ENCODE measurements at regions of chr15 and their contacts with region 1.

Region 1: GRCh38 chr15:56821721-56822425 is 88.6 kb upstream of the ZNF280D start:
- DNase-seq: peak; percentile 7
- H3K4me3 Mint-ChIP-seq: no peak overlapping the region
- H3K27ac Mint-ChIP-seq: no peak overlapping the region
- H3K4me1 Mint-ChIP-seq: peaks cover 7% of the 10 kb centered on the region
- H3K27me3 Mint-ChIP-seq: peaks cover 7% of the 10 kb centered on the region

Region 2: DNA sequence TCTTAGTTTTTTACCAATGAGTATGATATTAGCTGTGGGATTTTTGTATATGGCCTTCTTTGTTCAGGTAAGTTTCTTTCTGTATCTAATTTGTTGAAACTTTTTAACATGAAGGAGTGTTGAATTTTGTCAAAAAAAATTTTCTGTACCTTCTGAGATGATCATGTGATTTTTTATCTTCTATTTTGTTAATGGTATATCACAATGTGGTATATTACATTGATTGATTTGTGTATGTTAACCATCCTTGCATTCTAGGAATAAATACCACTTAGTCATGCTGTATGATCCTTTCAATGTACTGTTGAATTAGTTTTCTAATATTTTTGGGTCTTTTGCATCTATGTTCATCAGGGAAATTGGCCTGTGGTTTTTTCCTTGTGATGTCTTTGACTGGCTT is 264.5 kb before region 1 on chr15:
- intact Hi-C with region 1: no loop called
- DNase-seq: no peak
- H3K4me3 Mint-ChIP-seq: no peak overlapping the region
- H3K27ac Mint-ChIP-seq: no peak overlapping the region
- H3K4me1 Mint-ChIP-seq: no peaks in the 10 kb centered on the region
- H3K27me3 Mint-ChIP-seq: peaks cover 9% of the 10 kb centered on the region

Region 3: DNA sequence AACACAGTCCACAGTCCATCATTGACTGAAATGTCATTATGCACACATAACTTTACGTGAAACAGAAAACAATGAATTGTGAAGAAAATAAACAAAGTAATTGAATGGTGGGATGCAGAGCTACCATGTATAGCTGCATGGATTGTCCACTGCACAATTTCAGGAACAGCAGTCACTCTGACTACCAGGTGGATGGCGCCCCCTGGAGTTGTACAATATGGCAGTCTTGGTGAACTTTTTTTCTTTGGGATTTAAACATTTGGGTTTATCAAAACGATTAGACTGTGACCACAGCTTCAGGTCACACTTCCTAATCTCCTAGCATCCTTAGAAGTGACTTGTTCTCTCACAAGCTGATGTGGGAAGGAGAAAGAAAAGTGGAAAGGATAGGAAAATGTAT is 47.7 kb after region 1 on chr15:
- intact Hi-C with region 1: loop called (anchors 5 kb)
- DNase-seq: peak; percentile 8
- H3K4me3 Mint-ChIP-seq: no peak overlapping the region
- H3K27ac Mint-ChIP-seq: no peak overlapping the region
- H3K4me1 Mint-ChIP-seq: no peaks in the 10 kb centered on the region
- H3K27me3 Mint-ChIP-seq: peaks cover 12% of the 10 kb centered on the region

Measured in activated T-helper 1 cell treated with anti-CD3 and anti-CD28 coated beads, Interleukin-12 subunit alpha, Interleukin-12 subunit beta, Interleukin-2, Interleukin-4 antibody, amounts not matched to agents 30 ng/mL and 10 ng/mL and 1 ng/mL, durations not matched to agents 14 hours and 24 hours and 36 hours (primary cell).